ENCODE measurements at regions of chr1 and their contacts with region 1.

Region 1: GRCh38 chr1:91165033-91165654 is 143.3 kb upstream of the ZNF644 start:
- DNase-seq: peak; percentile 76
- H3K4me3 Mint-ChIP-seq: no peak overlapping the region
- H3K27ac Mint-ChIP-seq: peak overlapping the region; percentile 43
- H3K4me1 Mint-ChIP-seq: no peaks in the 10 kb centered on the region
- H3K27me3 Mint-ChIP-seq: no peaks in the 10 kb centered on the region
- CTCF ChIP-seq: peak; percentile 82

Region 2: DNA sequence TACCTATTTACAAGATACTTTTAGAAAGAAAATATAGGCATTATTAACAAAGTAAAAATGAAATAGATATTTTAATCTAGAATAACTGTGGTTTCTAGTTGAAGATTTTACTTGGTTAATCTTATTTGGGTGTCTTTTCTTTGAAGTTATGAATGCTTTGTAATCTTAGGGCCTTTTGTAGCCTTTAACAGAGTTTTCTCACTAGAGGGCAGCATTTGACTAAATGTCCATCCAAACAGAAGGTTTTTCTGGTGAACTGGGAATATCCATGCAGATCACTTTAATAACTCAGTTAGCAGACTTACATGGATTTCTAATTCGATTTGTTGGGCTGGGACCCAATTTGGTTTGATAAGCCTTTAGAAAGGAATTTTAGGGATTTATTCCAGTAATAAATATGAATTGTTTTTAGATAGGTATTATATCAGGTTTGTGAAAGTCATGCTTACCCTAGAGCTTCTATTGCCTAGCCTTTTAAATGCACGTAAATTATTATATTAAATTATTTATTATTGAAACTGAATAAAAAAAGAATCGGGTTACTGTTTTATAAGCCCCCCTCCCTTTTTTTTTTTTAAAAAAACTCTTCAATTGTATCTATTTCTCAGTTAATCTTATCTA is 1050.5 kb before region 1 on chr1:
- CTCF ChIA-PET with region 1: interaction called, 14 read pairs
- POLR2A ChIA-PET with region 1: no interaction called
- intact Hi-C with region 1: loop called (anchors 1 kb)
- DNase-seq: peak; percentile 67
- H3K4me3 Mint-ChIP-seq: no peak overlapping the region
- H3K27ac Mint-ChIP-seq: no peak overlapping the region
- H3K4me1 Mint-ChIP-seq: no peaks in the 10 kb centered on the region
- H3K27me3 Mint-ChIP-seq: peaks cover 50% of the 10 kb centered on the region
- CTCF ChIP-seq: peak; percentile 62

Region 3: DNA sequence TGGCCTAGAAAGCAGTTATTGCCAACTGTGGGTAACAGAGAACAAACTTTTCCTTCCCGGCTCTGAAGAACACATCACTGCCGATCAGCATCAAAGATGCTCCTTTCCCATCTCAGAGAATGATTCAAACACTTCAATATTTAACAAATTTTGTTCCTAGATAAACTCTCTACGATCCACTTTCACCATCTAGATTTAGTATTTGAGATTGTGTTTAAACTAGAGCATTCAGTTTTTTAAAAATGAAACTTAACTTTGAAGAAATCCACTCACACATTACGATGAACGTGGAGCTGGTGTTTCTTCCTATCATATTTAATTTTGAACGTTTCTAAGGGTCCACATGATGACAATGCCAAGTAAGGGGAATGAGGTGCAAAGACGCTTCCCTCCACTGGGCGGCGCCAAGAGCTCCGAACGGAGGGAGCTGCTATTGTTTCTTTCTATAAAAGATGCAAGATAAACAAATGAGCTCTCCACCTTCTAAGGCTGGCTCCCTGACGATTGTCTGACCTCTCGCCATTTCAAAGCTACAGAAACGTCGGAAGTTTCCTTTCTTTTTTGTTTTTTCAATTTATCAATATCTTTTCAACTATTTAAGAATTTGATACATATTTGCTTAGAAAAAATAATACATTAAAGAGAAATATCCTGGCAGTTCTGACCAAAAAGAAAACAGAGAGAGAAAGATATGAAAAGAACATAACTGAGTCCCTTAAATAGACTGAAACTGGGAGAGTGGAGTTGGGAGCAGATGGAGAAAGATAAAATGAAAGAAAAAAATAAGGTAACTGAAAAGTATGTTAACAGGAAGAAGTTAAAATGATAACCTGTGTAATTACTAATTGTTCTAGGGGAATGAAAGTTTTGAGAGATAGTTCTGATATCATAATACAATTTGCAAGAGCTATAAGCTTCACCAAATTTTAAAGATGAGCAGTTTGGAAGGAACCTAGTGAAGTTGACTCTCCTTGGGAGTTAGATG is 443.6 kb before region 1 on chr1:
- CTCF ChIA-PET with region 1: interaction called, 24 read pairs
- POLR2A ChIA-PET with region 1: no interaction called
- intact Hi-C with region 1: loop called (anchors 1 kb)
- DNase-seq: peak; percentile 78
- H3K4me3 Mint-ChIP-seq: peak overlapping the region; percentile 11
- H3K27ac Mint-ChIP-seq: no peak overlapping the region
- H3K4me1 Mint-ChIP-seq: no peaks in the 10 kb centered on the region
- H3K27me3 Mint-ChIP-seq: peaks cover 3% of the 10 kb centered on the region
- CTCF ChIP-seq: peak; percentile 79

Region 4: DNA sequence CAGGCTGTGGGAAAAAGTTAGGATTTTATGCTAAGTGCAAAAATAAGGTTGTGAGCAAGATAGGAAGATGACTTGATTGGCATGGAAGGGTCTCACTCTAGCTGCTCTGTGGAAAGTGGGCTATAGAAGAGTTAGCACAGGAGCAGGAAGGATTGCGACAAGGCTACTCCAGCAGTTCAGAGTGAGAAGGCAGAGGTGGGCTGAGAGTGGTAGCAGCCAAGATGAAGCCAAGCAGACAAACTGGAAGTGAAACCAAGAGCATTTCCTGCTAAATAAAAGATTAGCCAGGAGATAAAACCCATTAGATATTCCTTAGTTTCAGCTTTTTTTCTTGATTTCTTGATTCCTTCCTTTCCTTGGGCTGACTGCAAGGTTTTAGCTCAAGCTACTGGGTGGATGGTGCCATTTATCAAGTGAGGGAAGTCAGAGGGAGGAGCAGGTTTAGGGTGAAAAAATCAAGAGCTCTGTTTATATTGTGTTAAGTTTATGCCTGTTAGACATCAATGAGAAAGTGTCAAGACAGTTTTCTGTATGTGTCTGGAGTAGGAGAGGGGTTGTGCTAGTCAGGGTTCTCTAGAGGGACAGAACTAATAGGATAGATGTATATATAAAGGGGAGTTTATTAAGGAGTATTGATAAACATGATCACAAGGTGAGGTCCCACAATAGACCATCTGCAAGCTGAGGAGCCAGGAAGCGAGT is 110.2 kb before region 1 on chr1:
- CTCF ChIA-PET with region 1: interaction called, 10 read pairs
- POLR2A ChIA-PET with region 1: no interaction called
- intact Hi-C with region 1: no loop called
- DNase-seq: no peak
- H3K4me3 Mint-ChIP-seq: no peak overlapping the region
- H3K27ac Mint-ChIP-seq: no peak overlapping the region
- H3K4me1 Mint-ChIP-seq: no peaks in the 10 kb centered on the region
- H3K27me3 Mint-ChIP-seq: no peaks in the 10 kb centered on the region
- CTCF ChIP-seq: no peak

Region 5: GRCh38 chr1:91148641-91149069 is 16.5 kb before region 1 on chr1:
- CTCF ChIA-PET with region 1: interaction called, 53 read pairs
- POLR2A ChIA-PET with region 1: interaction called, 3 read pairs
- intact Hi-C with region 1: no loop called
- DNase-seq: peak; percentile 17
- H3K4me3 Mint-ChIP-seq: no peak overlapping the region
- H3K27ac Mint-ChIP-seq: no peak overlapping the region
- H3K4me1 Mint-ChIP-seq: no peaks in the 10 kb centered on the region
- H3K27me3 Mint-ChIP-seq: peaks cover 8% of the 10 kb centered on the region
- CTCF ChIP-seq: no peak

Region 6: DNA sequence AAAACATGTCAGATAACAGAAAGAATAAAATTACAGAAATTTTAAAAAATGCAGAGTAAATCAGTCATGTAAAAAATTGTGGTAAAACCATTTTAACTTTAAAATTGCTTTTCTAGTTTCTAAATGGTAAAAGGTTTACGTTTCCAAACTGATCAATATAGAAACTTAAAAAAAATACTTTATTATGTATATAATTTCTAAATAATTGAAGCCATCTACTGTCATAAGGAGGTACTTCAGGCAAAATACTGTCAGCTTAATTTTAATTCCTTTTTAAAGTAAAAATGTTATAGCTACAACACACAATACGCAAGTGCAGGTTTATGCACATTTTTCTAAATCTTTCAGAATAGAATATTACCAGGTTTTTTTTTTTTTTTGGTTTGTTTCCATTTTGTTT is 79.6 kb after region 1 on chr1:
- CTCF ChIA-PET with region 1: interaction called, 29 read pairs
- POLR2A ChIA-PET with region 1: no interaction called
- intact Hi-C with region 1: loop called (anchors 2 kb)
- DNase-seq: no peak
- H3K4me3 Mint-ChIP-seq: no peak overlapping the region
- H3K27ac Mint-ChIP-seq: no peak overlapping the region
- H3K4me1 Mint-ChIP-seq: no peaks in the 10 kb centered on the region
- H3K27me3 Mint-ChIP-seq: peaks cover 40% of the 10 kb centered on the region
- CTCF ChIP-seq: no peak

Region 7: GRCh38 chr1:91404151-91405012 is 239.2 kb after region 1 on chr1 and contains the start of gene HFM1:
- CTCF ChIA-PET with region 1: interaction called, 14 read pairs
- POLR2A ChIA-PET with region 1: no interaction called
- intact Hi-C with region 1: loop called (anchors 1 kb)
- DNase-seq: no peak
- H3K4me3 Mint-ChIP-seq: no peak within 1 kb of the TSS
- H3K27ac Mint-ChIP-seq: no peak within 1 kb of the TSS
- H3K4me1 Mint-ChIP-seq: no peaks in the 10 kb centered on the region
- H3K27me3 Mint-ChIP-seq: peaks cover 82% of the 10 kb centered on the region
- CTCF ChIP-seq: no peak
- total RNA-seq, gene HFM1: not detected in 2 replicates